ENCODE measurements at regions of chr1 and their contacts with region 1.

Region 1: GRCh38 chr1:117128323-117129079 is 7.0 kb upstream of the TRIM45 start:
- DNase-seq: no peak
- ATAC-seq: peak; percentile 44
- H3K4me3 Mint-ChIP-seq: no peak overlapping the region
- H3K27ac Mint-ChIP-seq: no peak overlapping the region
- H3K4me1 Mint-ChIP-seq: no peaks in the 10 kb centered on the region
- H3K27me3 Mint-ChIP-seq: peaks cover 9% of the 10 kb centered on the region

Region 2: GRCh38 chr1:116570358-116571200 is 557.9 kb before region 1 on chr1 and contains the start of gene CD58:
- CTCF ChIA-PET with region 1: interaction called, 4 read pairs
- POLR2A ChIA-PET with region 1: no interaction called
- intact Hi-C with region 1: loop called (anchors 1 to 5 kb)
- DNase-seq: peak; percentile 93
- ATAC-seq: peak; percentile 77
- H3K4me3 Mint-ChIP-seq: peak within 1 kb of the TSS; percentile 91
- H3K27ac Mint-ChIP-seq: peak within 1 kb of the TSS; percentile 87
- H3K4me1 Mint-ChIP-seq: peaks cover 64% of the 10 kb centered on the region
- H3K27me3 Mint-ChIP-seq: peaks cover 8% of the 10 kb centered on the region
- total RNA-seq, gene CD58: 12.4 to 16.0 TPM

Region 3: DNA sequence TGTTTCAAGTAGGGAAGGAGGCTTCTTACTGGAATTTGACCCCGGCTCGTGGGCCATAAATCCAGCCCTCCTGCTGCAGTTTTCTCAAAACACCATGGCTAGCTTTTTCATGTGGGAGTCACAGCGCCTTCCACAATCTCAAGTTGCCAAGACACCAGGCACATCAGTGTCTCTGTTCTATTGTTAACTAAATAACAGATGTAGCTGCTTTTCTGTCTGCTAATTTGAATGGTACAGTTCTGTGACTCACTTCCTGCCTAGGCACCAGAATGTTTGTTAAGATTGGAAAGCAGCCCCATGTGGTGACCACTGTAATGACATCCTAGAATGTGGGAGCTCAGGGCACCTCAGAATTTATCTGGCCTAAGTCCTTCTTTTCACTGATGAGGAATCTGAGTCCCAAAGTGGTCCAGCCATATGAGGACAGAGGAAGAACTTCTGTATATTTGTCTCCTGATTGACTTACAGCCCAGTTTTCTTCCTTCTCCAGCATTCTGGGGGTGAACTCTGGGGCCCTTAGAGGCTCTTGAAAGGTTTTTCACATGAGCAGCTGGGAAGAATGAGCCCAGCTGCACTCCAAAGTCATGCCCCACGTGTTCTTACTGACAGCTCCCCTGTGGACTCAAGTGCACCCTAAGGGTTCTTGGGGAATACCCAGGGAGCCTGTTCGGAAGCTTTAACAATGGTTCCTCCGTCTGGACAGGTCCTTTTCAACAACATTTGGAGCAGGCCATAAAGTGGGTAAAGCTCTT is 34.5 kb before region 1 on chr1:
- CTCF ChIA-PET with region 1: interaction called, 18 read pairs
- POLR2A ChIA-PET with region 1: no interaction called
- intact Hi-C with region 1: no loop called
- DNase-seq: peak; percentile 60
- ATAC-seq: peak; percentile 85
- H3K4me3 Mint-ChIP-seq: no peak overlapping the region
- H3K27ac Mint-ChIP-seq: no peak overlapping the region
- H3K4me1 Mint-ChIP-seq: peaks cover 19% of the 10 kb centered on the region
- H3K27me3 Mint-ChIP-seq: no peaks in the 10 kb centered on the region